Activated T-helper 1 cell treated with anti-CD3 and anti-CD28 coated beads, Interleukin-12 subunit alpha, Interleukin-12 subunit beta, Interleukin-2, Interleukin-4 antibody, amounts not matched to agents 30 ng/mL and 10 ng/mL and 1 ng/mL, durations not matched to agents 14 hours and 24 hours and 36 hours (primary cell): ENCODE measurements at regions of chr2 and their contacts with region 1.

Region 1: DNA sequence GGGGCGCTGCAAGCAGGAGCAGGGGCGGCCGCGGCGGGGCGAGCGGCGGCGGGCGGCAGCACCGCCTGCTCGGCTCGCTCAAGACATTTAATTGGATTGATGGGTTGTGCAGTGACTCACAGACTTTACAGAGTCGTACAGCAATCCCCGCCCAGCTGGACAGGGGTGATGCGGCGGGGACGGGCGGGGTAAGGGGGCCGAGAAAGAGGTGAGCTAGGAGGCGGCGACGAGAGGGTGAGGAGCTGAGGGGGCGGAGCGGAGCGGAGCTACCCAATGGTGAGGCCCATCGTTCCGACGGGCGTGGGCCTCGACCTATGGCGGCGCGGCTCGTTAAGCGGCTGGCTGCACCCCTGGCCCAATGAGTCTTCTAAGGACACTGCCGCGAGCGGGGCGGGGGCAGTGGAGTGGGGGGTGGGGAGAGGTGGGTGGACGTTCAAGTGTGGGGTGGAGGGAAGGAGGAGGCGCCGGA is 97.1 kb upstream of the SERTAD2 start:
- DNase-seq: peak; percentile 97
- H3K4me3 Mint-ChIP-seq: peak overlapping the region; percentile 91
- H3K27ac Mint-ChIP-seq: peak overlapping the region; percentile 98
- H3K4me1 Mint-ChIP-seq: peaks cover 34% of the 10 kb centered on the region
- H3K27me3 Mint-ChIP-seq: no peaks in the 10 kb centered on the region

Region 2: GRCh38 chr2:64586883-64587481 is 163.9 kb before region 1 on chr2:
- intact Hi-C with region 1: loop called (anchors 1 kb)
- DNase-seq: no peak
- H3K4me3 Mint-ChIP-seq: no peak overlapping the region
- H3K27ac Mint-ChIP-seq: no peak overlapping the region
- H3K4me1 Mint-ChIP-seq: peaks cover 17% of the 10 kb centered on the region
- H3K27me3 Mint-ChIP-seq: no peaks in the 10 kb centered on the region

Region 3: DNA sequence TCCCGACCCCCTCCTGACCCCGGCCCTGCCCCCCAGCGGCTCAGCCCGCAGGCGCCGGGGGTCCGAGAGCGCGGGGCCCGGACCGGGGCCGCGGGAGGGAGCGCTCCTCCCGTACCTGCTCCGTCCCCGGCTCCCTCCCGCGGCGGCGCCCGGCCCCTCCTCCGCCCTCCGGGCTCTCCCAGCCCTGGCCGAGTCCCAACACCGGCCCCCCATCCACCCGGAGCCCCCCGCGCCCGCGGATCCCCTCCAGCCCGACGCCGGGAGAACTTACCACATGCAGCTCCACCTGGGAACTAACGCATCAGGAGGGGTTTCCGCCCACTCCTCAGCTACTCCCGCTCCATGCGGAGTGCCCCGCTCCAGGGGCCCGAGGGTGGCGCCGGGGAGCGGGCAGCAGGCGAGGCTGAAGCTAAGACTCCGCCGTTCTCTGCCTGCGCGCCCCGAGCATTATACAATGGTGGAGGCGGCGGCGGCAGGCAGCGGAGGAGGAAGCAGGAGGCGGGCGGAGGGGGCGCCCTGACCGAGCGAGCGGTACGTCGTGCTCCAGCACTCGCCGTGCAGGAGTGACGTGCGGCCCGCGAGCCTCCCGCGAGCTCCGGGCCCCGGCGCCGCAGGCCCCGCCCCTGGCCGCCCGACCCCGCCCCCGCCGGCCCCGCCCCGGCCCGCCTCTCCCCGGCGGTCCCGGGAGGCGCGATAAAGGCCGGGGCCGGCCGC is 97.3 kb before region 1 on chr2 and contains the start of gene SERTAD2:
- intact Hi-C with region 1: loop called (anchors 1 kb)
- DNase-seq: peak; percentile 83
- H3K4me3 Mint-ChIP-seq: peak within 1 kb of the TSS; percentile 90
- H3K27ac Mint-ChIP-seq: peak within 1 kb of the TSS; percentile 90
- H3K4me1 Mint-ChIP-seq: peaks cover 71% of the 10 kb centered on the region
- H3K27me3 Mint-ChIP-seq: no peaks in the 10 kb centered on the region
- total RNA-seq, gene SERTAD2: 27.3 and 28.5 TPM in 2 replicates

Region 4: GRCh38 chr2:64730551-64731262 is 20.1 kb before region 1 on chr2:
- intact Hi-C with region 1: loop called (anchors 1 kb)
- DNase-seq: peak; percentile 35
- H3K4me3 Mint-ChIP-seq: peak overlapping the region; percentile 85
- H3K27ac Mint-ChIP-seq: peak overlapping the region; percentile 89
- H3K4me1 Mint-ChIP-seq: peaks cover 77% of the 10 kb centered on the region
- H3K27me3 Mint-ChIP-seq: no peaks in the 10 kb centered on the region

Region 5: DNA sequence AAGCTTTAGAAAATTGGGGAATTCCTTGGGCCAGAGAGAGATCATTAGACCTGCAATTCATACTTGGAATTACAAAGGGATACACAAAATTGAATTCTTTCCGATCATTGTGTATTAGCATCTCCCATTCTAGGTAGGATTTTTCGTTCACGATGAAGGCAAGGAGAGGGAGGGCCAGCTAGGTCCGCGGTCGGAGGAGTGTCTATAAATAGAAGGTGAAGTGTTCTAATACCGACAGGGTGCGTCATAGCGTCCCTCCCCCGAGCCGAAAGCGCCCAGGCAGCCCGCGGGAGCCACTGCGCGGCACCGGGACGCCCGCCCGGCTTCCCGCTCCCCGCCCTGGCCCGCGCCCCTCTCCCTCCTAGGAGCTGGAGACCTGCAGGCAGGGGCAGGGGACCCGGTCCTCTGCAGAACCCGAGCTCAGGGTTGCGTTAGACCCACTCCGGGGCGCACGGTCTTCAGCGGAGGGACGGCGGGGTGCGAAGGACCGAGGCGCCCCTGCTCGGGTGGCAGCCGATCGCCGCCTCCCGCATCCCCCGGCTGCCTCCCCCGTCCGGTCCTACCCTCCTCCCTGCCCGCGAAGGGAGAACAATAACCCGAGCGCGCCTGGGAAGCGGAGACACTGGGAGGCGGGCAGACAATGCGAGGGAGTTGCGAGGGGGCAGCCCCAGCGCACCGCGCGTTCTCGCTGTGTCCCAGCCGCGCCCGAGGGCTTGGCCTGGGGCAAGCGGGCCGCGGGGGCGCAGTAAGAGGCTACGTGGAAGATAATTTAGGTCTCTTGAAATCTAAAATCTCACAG is 17.0 kb after region 1 on chr2:
- intact Hi-C with region 1: loop called (anchors 1 kb)
- DNase-seq: peak; percentile 69
- H3K4me3 Mint-ChIP-seq: peak overlapping the region; percentile 91
- H3K27ac Mint-ChIP-seq: peak overlapping the region; percentile 95
- H3K4me1 Mint-ChIP-seq: peaks cover 47% of the 10 kb centered on the region
- H3K27me3 Mint-ChIP-seq: no peaks in the 10 kb centered on the region

Region 6: GRCh38 chr2:64831134-64831976 is 80.5 kb after region 1 on chr2:
- intact Hi-C with region 1: loop called (anchors 1 kb)
- DNase-seq: peak; percentile 73
- H3K4me3 Mint-ChIP-seq: no peak overlapping the region
- H3K27ac Mint-ChIP-seq: peak overlapping the region; percentile 73
- H3K4me1 Mint-ChIP-seq: peaks cover 31% of the 10 kb centered on the region
- H3K27me3 Mint-ChIP-seq: peaks cover 1% of the 10 kb centered on the region

Region 7: GRCh38 chr2:64888591-64889309 is 137.9 kb after region 1 on chr2:
- intact Hi-C with region 1: no loop called
- DNase-seq: no peak
- H3K4me3 Mint-ChIP-seq: no peak overlapping the region
- H3K27ac Mint-ChIP-seq: no peak overlapping the region
- H3K4me1 Mint-ChIP-seq: no peaks in the 10 kb centered on the region
- H3K27me3 Mint-ChIP-seq: peaks cover 7% of the 10 kb centered on the region

Region 8: GRCh38 chr2:65056215-65057053 is 305.6 kb after region 1 on chr2 and contains the start of gene CEP68:
- intact Hi-C with region 1: loop called (anchors 10 kb)
- DNase-seq: peak; percentile 96
- H3K4me3 Mint-ChIP-seq: peak within 1 kb of the TSS; percentile 94
- H3K27ac Mint-ChIP-seq: peak within 1 kb of the TSS; percentile 84
- H3K4me1 Mint-ChIP-seq: peaks cover 48% of the 10 kb centered on the region
- H3K27me3 Mint-ChIP-seq: peaks cover 6% of the 10 kb centered on the region
- total RNA-seq, gene CEP68: 4.0 and 5.5 TPM in 2 replicates